ENCODE measurements at regions of chr3 and their contacts with region 1.

Region 1: GRCh38 chr3:102229062-102229655 is 205.7 kb upstream of the ZPLD1 start:
- DNase-seq: peak; percentile 19 to 75
- ATAC-seq: peak; percentile 78 to 88
- H3K4me3 ChIP-seq: no peak overlapping the region
- H3K27ac ChIP-seq: no peak overlapping the region
- H3K4me1 ChIP-seq: peaks cover 8% of the 10 kb centered on the region
- CTCF ChIP-seq: peak; percentile 92
- EP300 ChIP-seq: no peak
- POLR2A ChIP-seq: no peak
- RAD21 ChIP-seq: peak; percentile 94 to 95

Region 2: DNA sequence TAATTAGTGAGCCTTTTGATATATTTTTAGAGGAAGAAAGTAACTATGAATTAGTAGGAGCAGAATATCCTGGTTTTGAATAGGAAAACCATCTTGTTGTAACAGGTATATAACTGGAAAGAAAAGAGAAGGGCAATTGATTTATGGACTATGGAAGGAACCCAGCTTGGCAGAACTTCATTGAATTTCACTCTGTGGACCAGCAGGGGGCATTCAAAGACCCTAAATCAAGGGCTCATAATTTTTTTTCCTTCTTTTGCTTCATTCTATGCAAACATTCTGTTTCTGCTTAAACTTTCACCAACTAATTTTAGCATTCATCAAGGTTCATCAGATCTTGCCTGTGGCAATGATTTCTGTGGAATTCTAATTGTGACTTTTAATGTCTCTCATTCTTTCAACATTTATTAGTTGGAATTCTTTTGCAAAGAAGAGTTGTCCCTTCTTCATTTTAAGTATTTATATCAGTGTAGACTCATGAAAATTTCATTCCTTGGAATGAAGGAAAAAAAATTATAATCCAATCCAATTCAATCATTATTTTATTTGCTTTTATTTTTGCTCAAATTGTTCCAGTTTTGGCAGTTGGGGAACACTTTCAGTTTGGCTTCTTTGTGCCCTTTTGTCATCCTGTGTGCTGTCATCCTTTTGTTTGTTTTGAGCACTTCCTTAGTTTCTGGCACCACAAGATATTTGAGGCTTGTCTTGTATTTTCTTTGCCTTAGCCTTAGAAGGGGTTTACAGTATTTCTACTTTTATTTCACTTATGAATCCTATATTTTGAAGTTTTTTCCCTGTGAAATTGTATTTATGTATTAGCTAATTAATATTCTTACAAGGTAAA is 419.8 kb before region 1 on chr3:
- CTCF ChIA-PET with region 1: interaction called, 186 read pairs
- POLR2A ChIA-PET with region 1: interaction called, 3 read pairs
- DNase-seq: peak in 1 of 2 experiments; percentile 57
- ATAC-seq: peak; percentile 39 to 74; a peak in 3 of 6 replicates
- H3K4me3 ChIP-seq: no peak overlapping the region
- H3K27ac ChIP-seq: peak overlapping the region in 1 of 2 experiments; percentile 6; a peak in 1 of 6 replicates
- H3K4me1 ChIP-seq: peaks cover 23% of the 10 kb centered on the region
- CTCF ChIP-seq: peak; percentile 79
- EP300 ChIP-seq: no peak
- POLR2A ChIP-seq: no peak
- RAD21 ChIP-seq: peak; percentile 76 to 84

Region 3: DNA sequence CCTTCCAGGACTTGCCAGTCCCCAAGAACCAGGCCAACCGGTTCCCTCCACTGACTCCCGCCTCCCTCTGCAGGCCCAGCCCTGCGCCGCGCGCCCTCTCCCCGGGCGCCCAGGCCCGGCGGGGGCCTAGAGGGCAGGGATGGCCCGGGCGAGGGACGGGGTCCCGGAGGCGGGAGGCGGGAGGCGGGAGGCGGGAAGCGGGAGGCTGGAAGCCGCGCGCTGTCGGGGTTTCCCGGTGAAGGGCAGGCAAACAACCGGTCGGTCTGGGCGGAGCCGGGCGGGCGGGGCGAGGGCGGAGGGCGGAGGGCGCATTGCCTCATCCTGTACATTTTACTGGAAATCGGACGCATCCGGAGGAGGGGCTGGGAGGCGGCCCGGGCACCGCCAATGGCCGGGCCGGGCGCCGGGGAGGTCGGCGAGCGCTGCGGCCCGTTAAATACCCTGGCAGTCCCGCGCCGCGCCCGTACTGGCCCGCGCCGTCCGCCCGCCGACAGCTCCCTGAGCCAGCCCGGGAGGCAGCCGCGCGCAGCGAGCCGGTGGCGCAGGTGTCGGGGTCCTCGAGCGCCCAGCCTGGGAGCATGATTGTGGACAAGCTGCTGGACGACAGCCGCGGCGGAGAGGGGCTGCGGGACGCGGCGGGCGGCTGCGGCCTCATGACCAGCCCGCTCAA is 380.0 kb before region 1 on chr3 and contains the start of gene NFKBIZ:
- CTCF ChIA-PET with region 1: interaction called, 17 read pairs
- POLR2A ChIA-PET with region 1: interaction called, 33 read pairs
- DNase-seq: peak; percentile 91 to 92
- ATAC-seq: peak; percentile 90 to 92
- H3K4me3 ChIP-seq: peak within 1 kb of the TSS; percentile 84
- H3K27ac ChIP-seq: peak within 1 kb of the TSS; percentile 96 to 98
- H3K4me1 ChIP-seq: peaks cover 40% of the 10 kb centered on the region
- CTCF ChIP-seq: no peak
- EP300 ChIP-seq: no peak; a peak in 1 of 5 replicates
- POLR2A ChIP-seq: peak; percentile 99
- RAD21 ChIP-seq: no peak
- polyA plus RNA-seq, gene NFKBIZ: 32.9 and 36.1 TPM in 2 replicates

Region 4: GRCh38 chr3:101995371-101996046 is 233.7 kb before region 1 on chr3:
- CTCF ChIA-PET with region 1: interaction called, 18 read pairs
- POLR2A ChIA-PET with region 1: no interaction called
- DNase-seq: no peak
- ATAC-seq: peak in 1 of 2 experiments; percentile 23; a peak in 1 of 6 replicates
- H3K4me3 ChIP-seq: no peak overlapping the region
- H3K27ac ChIP-seq: peak overlapping the region in 1 of 2 experiments; percentile 46; a peak in 1 of 6 replicates
- H3K4me1 ChIP-seq: peaks cover 6% of the 10 kb centered on the region; the same call in 1 of the 3 replicates
- CTCF ChIP-seq: no peak
- EP300 ChIP-seq: no peak
- POLR2A ChIP-seq: no peak
- RAD21 ChIP-seq: no peak

Region 5: GRCh38 chr3:102536456-102536855 is 307.3 kb after region 1 on chr3:
- CTCF ChIA-PET with region 1: interaction called, 374 read pairs
- POLR2A ChIA-PET with region 1: interaction called, 8 read pairs
- DNase-seq: peak; percentile 15 to 40
- ATAC-seq: peak; percentile 74 to 79
- H3K4me3 ChIP-seq: no peak overlapping the region
- H3K27ac ChIP-seq: no peak overlapping the region
- H3K4me1 ChIP-seq: no peaks in the 10 kb centered on the region
- CTCF ChIP-seq: peak; percentile 73
- EP300 ChIP-seq: no peak
- POLR2A ChIP-seq: no peak
- RAD21 ChIP-seq: peak; percentile 66 to 84

Region 6: DNA sequence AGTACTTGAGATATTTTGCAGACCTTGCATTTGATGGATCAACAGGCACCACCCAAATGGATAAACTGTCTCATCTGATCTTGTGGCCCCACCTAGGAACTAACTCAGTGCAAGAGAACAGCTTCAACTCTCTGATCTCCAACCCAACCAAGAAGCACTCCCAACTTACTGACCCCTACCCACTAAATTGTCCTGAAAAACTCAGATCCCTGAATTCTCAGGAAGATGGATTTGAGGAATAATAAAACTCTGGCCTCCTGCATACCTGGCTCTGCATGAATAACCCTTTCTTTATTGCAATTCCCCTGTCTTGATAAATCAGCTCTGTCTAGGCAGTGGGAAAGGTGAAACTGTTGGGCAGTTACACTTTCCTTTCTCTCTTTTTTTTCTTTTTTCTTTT is 453.6 kb after region 1 on chr3:
- CTCF ChIA-PET with region 1: no interaction called
- POLR2A ChIA-PET with region 1: no interaction called
- DNase-seq: no peak
- ATAC-seq: no peak
- H3K4me3 ChIP-seq: no peak overlapping the region
- H3K27ac ChIP-seq: no peak overlapping the region
- H3K4me1 ChIP-seq: no peaks in the 10 kb centered on the region
- CTCF ChIP-seq: no peak
- EP300 ChIP-seq: no peak
- POLR2A ChIP-seq: no peak
- RAD21 ChIP-seq: no peak

Measured in A549 (cell line).